Endothelial cell of umbilical vein (primary cell): ENCODE measurements at regions of chr11 and their contacts with region 1.

Region 1: GRCh38 chr11:124673333-124674167 is at the starts of genes SIAE and SPA17:
- DNase-seq: peak; percentile 97
- H3K4me3 ChIP-seq: peak within 1 kb of the TSS; percentile 65 to 95 (median 65)
- H3K27ac ChIP-seq: peak within 1 kb of the TSS; percentile 63
- H3K4me1 ChIP-seq: peaks cover 26% of the 10 kb centered on the region
- H3K27me3 ChIP-seq: no peaks in the 10 kb centered on the region
- CTCF ChIP-seq: no peak
- POLR2A ChIP-seq: peak; percentile 96
- total RNA-seq, gene SIAE: 15.1 and 16.9 TPM in 2 replicates
- total RNA-seq, gene SPA17: 4.7 and 6.1 TPM in 2 replicates

Region 2: GRCh38 chr11:124644426-124645280 is 28.9 kb before region 1 on chr11:
- CTCF ChIA-PET with region 1: interaction called, 25 read pairs
- POLR2A ChIA-PET with region 1: no interaction called
- dilution Hi-C with region 1: no loop called
- intact Hi-C with region 1: loop called (anchors 1 kb)
- DNase-seq: peak; percentile 87
- H3K4me3 ChIP-seq: peak overlapping the region in 1 of 3 experiments; percentile 32
- H3K27ac ChIP-seq: peak overlapping the region; percentile 22
- H3K4me1 ChIP-seq: peaks cover 18% of the 10 kb centered on the region
- H3K27me3 ChIP-seq: no peaks in the 10 kb centered on the region
- CTCF ChIP-seq: peak; percentile 56 to 79
- POLR2A ChIP-seq: no peak

Region 3: DNA sequence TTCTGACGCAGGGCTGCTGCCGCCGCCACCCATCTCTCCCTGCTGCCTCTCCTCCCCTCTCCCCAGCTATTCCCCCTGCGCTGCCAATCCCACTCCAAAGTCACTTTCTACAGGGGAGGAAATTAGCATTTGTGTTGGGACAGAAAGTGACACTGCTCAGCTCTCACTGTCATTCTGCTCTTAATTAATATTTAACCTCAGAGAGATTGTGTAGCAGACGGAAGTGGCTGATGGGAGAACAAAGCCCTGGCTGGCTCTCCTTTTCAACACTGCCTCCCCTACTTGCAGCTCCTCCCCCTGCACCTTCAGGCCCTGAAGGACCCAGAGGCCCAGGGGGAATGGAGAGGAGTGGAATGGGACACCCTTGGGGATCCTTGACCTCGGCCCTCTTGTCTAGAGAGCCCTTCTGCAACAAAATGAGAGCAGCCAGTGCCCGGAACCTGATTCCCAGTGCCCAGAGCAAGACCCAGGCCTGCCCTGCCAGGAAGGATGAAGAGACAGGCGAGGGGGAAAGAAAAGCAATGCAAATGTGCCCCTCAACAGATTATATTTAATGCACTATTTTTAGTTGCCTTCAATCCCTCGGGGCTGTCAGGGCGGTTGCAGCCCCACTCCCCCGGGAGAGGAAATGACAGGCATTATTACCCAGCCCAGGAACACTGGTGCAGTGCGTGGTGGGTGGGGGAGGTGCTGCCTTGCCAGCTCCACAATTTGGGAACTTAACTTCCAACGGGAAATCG is 51.6 kb after region 1 on chr11:
- CTCF ChIA-PET with region 1: interaction called, 15 read pairs
- POLR2A ChIA-PET with region 1: no interaction called
- dilution Hi-C with region 1: no loop called
- intact Hi-C with region 1: loop called (anchors 2 kb)
- DNase-seq: no peak
- H3K4me3 ChIP-seq: peak overlapping the region in 1 of 3 experiments; percentile 9
- H3K27ac ChIP-seq: peak overlapping the region; percentile 77
- H3K4me1 ChIP-seq: peaks cover 24% of the 10 kb centered on the region
- H3K27me3 ChIP-seq: no peaks in the 10 kb centered on the region
- CTCF ChIP-seq: no peak
- POLR2A ChIP-seq: no peak

Region 4: GRCh38 chr11:124753205-124753604 is 79.7 kb after region 1 on chr11:
- CTCF ChIA-PET with region 1: interaction called, 267 read pairs
- POLR2A ChIA-PET with region 1: interaction called, 4 read pairs
- dilution Hi-C with region 1: no loop called
- intact Hi-C with region 1: no loop called
- DNase-seq: no peak
- H3K4me3 ChIP-seq: no peak overlapping the region
- H3K27ac ChIP-seq: peak overlapping the region; percentile 28
- H3K4me1 ChIP-seq: peaks cover 77% of the 10 kb centered on the region
- H3K27me3 ChIP-seq: no peaks in the 10 kb centered on the region
- CTCF ChIP-seq: no peak
- POLR2A ChIP-seq: no peak

Region 5: DNA sequence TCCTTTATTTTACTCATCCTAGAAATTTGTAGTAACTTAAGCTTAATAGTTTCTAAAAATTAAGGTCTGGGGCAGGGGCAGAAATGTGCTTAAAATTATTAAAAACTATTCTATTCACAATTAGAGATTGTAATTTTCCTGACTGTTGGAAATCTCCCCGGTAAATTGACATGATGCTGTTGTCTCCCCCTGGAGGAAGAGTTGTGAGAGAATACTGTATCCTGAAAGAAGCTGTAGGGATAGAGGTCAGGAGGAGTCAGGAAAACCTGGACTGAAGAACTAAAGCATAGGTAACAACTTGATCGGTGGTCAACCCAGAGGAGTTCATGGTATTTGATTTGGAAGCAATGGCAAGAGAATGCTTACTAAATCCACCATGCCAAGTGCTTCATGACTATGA is 104.7 kb after region 1 on chr11:
- CTCF ChIA-PET with region 1: interaction called, 45 read pairs
- POLR2A ChIA-PET with region 1: interaction called, 3 read pairs
- dilution Hi-C with region 1: no loop called
- intact Hi-C with region 1: no loop called
- DNase-seq: no peak
- H3K4me3 ChIP-seq: no peak overlapping the region
- H3K27ac ChIP-seq: no peak overlapping the region
- H3K4me1 ChIP-seq: no peaks in the 10 kb centered on the region
- H3K27me3 ChIP-seq: no peaks in the 10 kb centered on the region
- CTCF ChIP-seq: peak in 1 of 2 donors; percentile 26
- POLR2A ChIP-seq: no peak